Prostate gland (tissue), 2 donors: ENCODE measurements at regions of chr1 and their contacts with region 1.

Region 1: DNA sequence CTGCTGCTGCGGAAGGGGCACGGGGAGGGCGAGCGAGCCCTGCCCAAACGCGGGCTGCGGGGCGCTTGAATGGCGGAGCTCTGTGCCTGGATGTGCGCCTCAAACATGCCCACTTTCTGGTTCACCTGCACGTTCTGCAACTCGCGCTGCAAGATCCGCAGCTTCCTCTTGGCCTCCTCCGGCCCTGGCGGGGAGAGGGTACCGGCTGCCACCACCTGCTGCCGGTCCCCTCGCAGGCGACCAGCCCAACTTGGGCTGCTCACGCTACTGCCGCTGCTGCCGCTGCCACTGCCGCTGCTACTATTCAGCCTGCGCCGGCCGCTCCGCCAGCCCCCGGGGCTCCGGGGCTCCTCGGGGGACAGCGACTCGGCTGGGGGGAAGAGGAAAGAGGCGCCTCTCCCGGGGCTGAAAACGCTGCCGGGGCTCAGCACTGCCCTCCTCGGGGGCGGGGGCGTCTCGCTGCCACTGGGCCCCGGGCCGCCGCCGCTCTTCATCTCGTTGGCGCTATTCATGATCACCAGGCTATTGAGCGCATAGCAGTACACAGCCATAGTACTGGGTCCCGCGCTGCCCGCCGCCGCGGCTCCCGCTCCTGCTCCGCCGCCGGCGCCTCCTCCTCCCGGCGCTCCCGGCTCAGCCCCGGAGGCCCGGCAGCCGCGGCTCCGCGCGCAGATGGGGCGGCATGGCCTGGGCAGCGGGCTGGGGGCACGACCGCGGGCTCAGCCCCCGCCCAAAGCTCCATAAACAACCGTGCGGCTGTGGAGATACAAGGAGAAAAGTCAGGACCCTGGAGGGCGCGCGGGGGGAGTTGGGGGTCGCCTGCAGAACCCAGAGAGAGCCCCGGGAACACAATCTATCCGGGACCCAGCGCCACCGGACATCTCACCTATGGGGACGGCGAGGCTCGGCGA is 1.9 kb downstream of the ITPKB start:
- DNase-seq: peak; percentile 40
- H3K4me3 ChIP-seq: peak overlapping the region; percentile 83 to 88
- H3K27ac ChIP-seq: peak overlapping the region; percentile 88 to 95
- H3K4me1 ChIP-seq: peaks cover 31% of the 10 kb centered on the region
- H3K27me3 ChIP-seq: no peaks in the 10 kb centered on the region
- CTCF ChIP-seq: peak in 1 of 4 experiments; percentile 24
- POLR2A ChIP-seq: peak; percentile 34

Region 2: DNA sequence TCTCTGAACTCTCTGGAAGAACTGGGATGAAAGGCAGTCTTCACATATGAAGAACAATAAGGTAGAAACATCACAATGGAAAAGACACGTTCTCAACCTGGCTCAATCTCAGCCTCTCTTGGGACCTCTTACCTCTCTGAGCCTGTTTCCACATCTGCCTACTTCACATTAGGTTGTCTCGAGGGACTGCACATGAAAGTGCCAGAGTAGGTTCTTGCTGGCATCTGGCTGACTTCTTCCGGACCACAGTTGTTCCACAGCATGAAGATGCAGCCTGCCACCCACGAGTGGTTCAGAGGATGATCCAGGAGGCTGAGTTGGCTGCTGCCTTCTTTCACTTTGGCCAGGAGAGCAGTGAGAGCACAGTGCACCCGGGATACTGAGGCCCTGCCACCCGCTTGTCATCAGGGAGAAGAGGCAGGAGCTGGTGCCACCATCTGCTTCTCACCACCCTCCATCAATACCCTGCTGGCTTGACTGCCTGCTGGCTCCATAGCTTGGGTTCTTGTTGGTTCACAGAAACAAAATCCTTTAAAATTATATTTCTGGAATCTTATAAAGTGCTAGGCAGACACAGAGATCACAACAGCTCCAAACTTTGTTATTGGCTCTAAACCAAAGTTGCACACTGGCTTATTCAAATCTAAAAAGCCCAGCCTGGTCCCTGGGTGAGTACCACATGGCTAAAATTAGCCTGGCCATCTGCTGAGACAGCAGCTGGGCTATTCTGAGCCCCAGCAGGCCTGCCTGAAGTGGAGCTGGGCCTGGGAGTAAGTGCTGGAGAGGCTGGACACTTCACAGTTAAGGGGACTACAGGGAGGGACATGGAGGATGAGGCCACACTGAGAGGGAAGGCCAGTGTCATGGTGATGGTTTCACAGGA is 381.3 kb before region 1 on chr1:
- intact Hi-C with region 1: no loop called
- DNase-seq: no peak
- H3K4me3 ChIP-seq: no peak overlapping the region
- H3K27ac ChIP-seq: no peak overlapping the region
- H3K4me1 ChIP-seq: no peaks in the 10 kb centered on the region
- H3K27me3 ChIP-seq: no peaks in the 10 kb centered on the region
- CTCF ChIP-seq: no peak
- POLR2A ChIP-seq: no peak

Region 3: DNA sequence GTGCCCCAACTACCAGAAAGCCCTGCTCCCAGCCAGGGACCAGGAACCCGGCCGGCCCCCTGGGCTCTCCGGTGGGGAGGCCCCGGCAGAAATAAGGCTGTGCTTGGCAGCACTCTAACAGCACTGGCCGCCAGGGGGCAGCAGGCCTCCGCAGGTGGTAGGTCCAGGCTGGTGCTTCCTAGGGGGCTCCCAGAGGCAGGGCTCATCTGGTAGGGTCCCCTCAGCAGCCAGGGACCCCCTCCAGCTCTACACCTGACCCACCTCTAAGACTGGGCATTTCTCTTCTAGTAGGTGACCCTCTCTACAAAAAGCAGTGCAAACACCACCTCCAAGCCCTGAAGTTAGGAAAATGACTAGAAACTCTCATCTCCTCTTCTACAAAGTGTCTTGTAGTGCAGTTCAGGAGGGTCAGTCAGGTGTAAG is 103.0 kb before region 1 on chr1:
- intact Hi-C with region 1: loop called (anchors 5 kb)
- DNase-seq: peak; percentile 79
- H3K4me3 ChIP-seq: no peak overlapping the region
- H3K27ac ChIP-seq: peak overlapping the region; percentile 26 to 47
- H3K4me1 ChIP-seq: peaks cover 18% of the 10 kb centered on the region
- H3K27me3 ChIP-seq: no peaks in the 10 kb centered on the region
- CTCF ChIP-seq: peak; percentile 90 to 96 (median 94)
- POLR2A ChIP-seq: no peak

Region 4: DNA sequence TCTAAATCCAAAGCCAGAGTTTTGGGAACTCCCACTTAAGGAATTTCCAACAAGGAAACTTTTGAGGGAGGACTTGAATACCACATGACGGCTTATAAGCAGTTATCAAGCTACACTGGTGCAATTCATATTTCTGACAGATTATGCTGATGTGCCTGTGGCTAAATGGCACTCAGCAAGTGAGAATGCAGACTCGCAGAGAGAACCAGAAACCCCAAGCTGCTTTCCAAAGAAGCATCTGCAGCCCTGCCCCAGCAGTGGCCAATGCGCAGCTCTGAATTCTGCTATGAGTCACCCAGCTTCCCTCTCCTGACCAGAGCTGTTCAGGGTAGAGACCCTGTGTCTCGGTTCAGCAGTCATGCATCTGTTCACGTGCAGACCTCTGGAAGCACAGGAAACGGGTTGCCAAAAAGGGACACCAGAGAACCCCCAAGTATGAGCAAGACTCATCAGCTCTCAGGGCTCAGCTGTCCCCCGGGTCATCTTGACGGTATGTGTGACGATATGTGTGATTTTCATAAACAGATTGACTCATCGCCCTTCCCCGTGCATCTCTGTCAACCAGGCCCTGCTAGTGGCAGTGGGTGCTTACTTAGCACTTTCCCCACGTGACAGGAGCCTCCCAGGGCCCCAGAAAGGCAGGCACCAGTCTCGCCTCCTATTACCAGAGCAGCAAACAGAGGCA is 74.4 kb before region 1 on chr1:
- intact Hi-C with region 1: loop called (anchors 5 kb)
- DNase-seq: peak; percentile 47
- H3K4me3 ChIP-seq: no peak overlapping the region
- H3K27ac ChIP-seq: peak overlapping the region; percentile 62 to 74
- H3K4me1 ChIP-seq: peaks cover 46% of the 10 kb centered on the region
- H3K27me3 ChIP-seq: no peaks in the 10 kb centered on the region
- CTCF ChIP-seq: no peak
- POLR2A ChIP-seq: no peak

Region 5: DNA sequence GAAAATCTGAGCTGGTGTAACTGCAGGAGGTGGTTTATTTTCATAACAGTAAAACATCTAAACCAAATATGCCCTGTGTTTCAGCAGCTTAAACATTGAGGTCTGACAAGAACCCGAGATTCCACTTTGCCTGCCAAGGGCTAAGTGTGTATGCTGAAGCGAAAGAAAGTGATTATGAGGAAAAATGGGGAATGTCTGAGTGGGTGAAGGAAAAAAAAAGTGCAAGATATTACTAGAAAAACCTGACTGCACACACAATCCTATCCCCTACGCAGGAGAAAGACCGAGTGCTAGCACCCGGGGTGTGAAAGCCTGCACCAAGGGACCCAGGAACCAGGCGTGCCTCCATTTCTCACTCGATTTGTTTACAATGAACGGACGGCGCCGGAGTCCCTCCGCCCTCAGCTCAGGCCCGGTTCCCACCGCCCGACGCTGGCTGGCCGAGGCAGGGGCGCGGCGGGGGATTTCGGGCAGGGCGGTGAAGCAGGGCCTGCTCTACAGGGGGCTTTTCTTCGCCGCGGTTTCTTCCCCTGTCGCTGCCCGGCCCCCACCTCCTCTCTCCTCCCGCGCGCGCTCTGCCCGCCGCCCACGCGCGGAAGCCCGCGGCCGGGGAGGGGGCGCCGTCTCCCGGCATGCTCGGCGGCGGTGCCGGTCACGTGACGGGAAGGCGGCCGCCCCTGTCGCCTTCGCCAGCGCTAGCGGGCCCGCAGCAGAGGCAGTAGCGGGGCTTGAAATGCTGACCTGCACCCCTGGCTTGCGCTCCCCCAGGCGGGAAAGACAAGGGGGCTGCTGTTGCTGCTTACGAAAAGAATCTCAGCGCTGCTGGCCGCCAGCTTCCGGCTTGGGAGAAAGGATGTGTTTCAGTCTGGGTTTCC is 34.0 kb before region 1 on chr1:
- intact Hi-C with region 1: loop called (anchors 2 kb)
- DNase-seq: peak; percentile 85
- H3K4me3 ChIP-seq: peak overlapping the region; percentile 53 to 63
- H3K27ac ChIP-seq: peak overlapping the region; percentile 97 to 99
- H3K4me1 ChIP-seq: peaks cover 36% of the 10 kb centered on the region
- H3K27me3 ChIP-seq: no peaks in the 10 kb centered on the region
- CTCF ChIP-seq: peak in 1 of 4 experiments; percentile 10
- POLR2A ChIP-seq: peak; percentile 82

Region 6: GRCh38 chr1:226708342-226708780 is 28.8 kb before region 1 on chr1:
- intact Hi-C with region 1: loop called (anchors 2 kb)
- DNase-seq: no peak
- H3K4me3 ChIP-seq: no peak overlapping the region
- H3K27ac ChIP-seq: peak overlapping the region; percentile 56 to 58
- H3K4me1 ChIP-seq: peaks cover 29% of the 10 kb centered on the region
- H3K27me3 ChIP-seq: no peaks in the 10 kb centered on the region
- CTCF ChIP-seq: no peak
- POLR2A ChIP-seq: no peak

Region 7: GRCh38 chr1:226827968-226828513 is 90.9 kb after region 1 on chr1:
- intact Hi-C with region 1: loop called (anchors 5 kb)
- DNase-seq: peak; percentile 93
- H3K4me3 ChIP-seq: no peak overlapping the region
- H3K27ac ChIP-seq: peak overlapping the region in 1 of 2 donors; percentile 31
- H3K4me1 ChIP-seq: no peaks in the 10 kb centered on the region
- H3K27me3 ChIP-seq: no peaks in the 10 kb centered on the region
- CTCF ChIP-seq: peak; percentile 88 to 94 (median 92)
- POLR2A ChIP-seq: no peak